PC-9 (cell line): ENCODE measurements at regions of chr1 and their contacts with region 1.

Region 1: DNA sequence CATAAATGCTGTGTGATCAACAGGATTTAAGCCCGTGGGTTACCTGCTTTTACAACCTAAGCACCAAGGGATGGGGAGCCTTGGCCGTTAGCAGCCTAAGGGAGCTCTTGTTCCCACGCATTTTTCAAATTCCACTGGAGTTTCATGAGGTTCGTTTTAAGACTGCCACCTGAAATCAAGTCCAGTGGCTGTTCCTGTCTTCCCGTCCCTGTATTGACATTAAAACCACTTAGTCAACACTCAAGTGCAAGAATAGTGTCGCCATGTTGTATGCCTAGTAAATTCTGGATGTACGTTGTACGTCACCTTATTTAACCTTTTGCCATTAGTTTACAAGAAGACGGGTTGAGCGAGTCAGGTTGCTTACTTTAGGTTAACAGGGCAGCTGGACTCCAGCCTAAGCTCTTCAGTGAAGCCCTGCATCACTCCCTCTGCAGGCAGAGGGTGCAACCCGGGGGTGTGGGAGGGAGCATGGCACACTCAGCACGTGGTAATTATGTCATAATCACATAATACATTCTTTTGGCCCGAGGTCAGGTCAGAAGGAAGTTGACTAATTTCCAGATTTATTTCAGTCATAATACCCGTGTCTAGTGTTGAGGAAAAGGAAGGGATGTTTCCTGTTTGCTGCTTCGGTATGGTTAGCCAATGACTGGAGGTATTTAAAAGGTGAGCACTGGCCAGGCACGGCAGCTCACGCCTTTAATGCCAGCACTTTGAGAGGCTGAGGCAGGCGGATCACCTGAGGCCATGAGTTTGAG is 42.5 kb downstream of the CNST start:
- DNase-seq: peak; percentile 91 to 96
- H3K4me3 ChIP-seq: no peak overlapping the region
- H3K27ac ChIP-seq: peak overlapping the region; percentile 81
- H3K4me1 ChIP-seq: peaks cover 15% of the 10 kb centered on the region
- H3K27me3 ChIP-seq: no peaks in the 10 kb centered on the region
- CTCF ChIP-seq: no peak

Region 2: DNA sequence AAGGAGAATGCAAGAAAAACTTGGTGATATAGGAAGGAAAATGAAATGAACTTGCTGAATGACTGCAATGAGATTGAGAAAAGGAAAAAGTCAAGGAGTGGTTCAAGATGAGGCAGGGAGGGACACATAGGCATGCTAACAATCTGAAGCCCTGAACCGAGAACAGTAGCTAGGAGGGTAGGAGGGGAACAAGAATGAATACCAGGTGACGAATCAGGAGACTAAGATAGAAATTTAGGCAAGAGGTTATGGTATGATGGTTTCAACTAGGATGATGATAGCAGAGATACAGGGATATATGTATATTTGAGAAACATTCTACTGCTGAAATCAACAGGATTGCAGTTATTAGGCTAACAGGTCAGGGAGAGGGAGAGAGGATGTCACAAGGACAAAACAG is 145.8 kb before region 1 on chr1:
- CTCF ChIA-PET with region 1: no interaction called
- POLR2A ChIA-PET with region 1: no interaction called
- intact Hi-C with region 1: no loop called
- DNase-seq: no peak
- H3K4me3 ChIP-seq: no peak overlapping the region
- H3K27ac ChIP-seq: no peak overlapping the region
- H3K4me1 ChIP-seq: no peaks in the 10 kb centered on the region
- H3K27me3 ChIP-seq: no peaks in the 10 kb centered on the region
- CTCF ChIP-seq: no peak

Region 3: DNA sequence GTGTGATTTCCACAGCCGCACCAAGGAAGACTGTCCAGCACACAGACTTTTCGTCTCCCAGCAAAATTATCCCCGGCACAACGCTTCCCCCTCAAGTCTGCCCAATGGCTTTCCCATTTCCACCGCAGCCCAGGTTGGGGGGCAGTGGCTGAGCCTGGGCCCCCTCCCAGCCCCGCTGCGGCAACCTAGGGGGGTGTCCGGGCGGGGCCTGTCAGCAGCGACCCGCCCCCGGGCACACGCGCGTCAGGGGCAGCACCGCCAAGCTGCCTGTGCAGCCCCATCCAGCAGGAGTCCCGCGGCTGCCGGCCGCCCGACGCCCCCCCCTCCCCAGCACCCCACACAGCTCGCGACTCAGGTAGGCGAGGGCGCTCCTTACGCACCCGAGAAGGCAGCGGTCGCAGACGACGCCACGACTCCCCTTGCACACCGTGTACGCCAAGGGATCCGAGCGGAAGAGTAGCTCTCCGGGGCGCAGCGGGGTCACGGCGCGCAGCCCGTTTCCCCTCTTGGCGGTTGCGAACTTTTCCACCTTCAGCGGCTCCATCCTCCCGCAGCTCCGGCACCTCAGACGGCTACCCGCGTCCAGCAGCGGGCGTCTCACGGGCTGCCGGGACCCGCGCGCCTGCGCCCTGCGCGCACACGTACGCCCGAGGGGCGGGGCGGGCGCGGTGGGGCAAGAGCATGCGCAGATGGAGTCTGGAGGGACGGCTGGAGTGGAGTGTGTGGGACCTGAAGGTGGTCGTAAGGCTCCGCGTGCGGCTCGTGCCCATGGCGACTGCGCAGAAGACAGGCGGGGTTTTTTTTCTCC is 101.9 kb before region 1 on chr1 and contains the start of gene SMYD3:
- CTCF ChIA-PET with region 1: no interaction called
- POLR2A ChIA-PET with region 1: no interaction called
- intact Hi-C with region 1: loop called (anchors 2 kb)
- DNase-seq: peak; percentile 48 to 76
- H3K4me3 ChIP-seq: peak within 1 kb of the TSS; percentile 75
- H3K27ac ChIP-seq: no peak within 1 kb of the TSS
- H3K4me1 ChIP-seq: peaks cover 26% of the 10 kb centered on the region
- H3K27me3 ChIP-seq: no peaks in the 10 kb centered on the region
- CTCF ChIP-seq: no peak
- total RNA-seq, gene SMYD3: 28.2 and 29.6 TPM in 2 replicates

Region 4: GRCh38 chr1:246632281-246633087 is 23.7 kb after region 1 on chr1:
- CTCF ChIA-PET with region 1: no interaction called
- POLR2A ChIA-PET with region 1: no interaction called
- intact Hi-C with region 1: loop called (anchors 1 kb)
- DNase-seq: peak in 1 of 2 experiments; percentile 89
- H3K4me3 ChIP-seq: peak overlapping the region; percentile 23; the same call in 1 of the 2 replicates
- H3K27ac ChIP-seq: peak overlapping the region; percentile 90
- H3K4me1 ChIP-seq: peaks cover 18% of the 10 kb centered on the region
- H3K27me3 ChIP-seq: no peaks in the 10 kb centered on the region
- CTCF ChIP-seq: no peak

Region 5: DNA sequence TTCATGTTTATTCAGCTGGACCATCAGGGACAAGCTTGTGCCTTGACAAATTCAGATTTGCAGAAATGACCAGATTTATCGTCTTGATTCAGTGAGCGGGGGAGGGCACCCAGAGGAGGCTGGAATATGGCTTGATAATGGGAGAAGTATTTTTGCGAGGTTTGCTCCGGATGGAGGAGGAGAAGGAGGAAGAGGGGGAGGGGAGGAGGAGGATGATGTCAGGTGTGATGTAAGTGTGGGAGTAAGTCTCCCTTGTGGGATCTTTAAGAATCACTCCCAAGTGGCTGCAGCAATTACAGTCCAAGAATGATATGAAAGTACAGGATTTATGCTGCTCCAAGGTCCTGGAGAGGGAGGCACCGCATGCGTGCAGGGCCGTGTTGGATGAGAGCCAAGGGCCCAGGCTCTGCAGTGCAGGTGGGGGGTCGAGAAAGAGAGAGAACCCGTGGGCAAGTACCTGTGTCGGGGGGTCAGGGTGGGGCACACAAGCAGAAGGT is 728.5 kb after region 1 on chr1:
- CTCF ChIA-PET with region 1: no interaction called
- POLR2A ChIA-PET with region 1: interaction called, 15 read pairs
- intact Hi-C with region 1: no loop called
- DNase-seq: no peak
- H3K4me3 ChIP-seq: no peak overlapping the region
- H3K27ac ChIP-seq: no peak overlapping the region
- H3K4me1 ChIP-seq: 0 out of 2 replicates have a peak, but pooled peaks cover 4% of the 10 kb centered on the region
- H3K27me3 ChIP-seq: no peaks in the 10 kb centered on the region
- CTCF ChIP-seq: no peak